Motor neuron (in vitro differentiated cells): ENCODE measurements at regions of chr15 and their contacts with region 1.

Region 1: GRCh38 chr15:88620995-88621772 is at the start of gene AEN:
- ATAC-seq: peak; percentile 83 to 98 (median 96)
- H3K4me3 ChIP-seq: peak within 1 kb of the TSS; percentile 55 to 79 (median 73)
- H3K27ac ChIP-seq: peak within 1 kb of the TSS; percentile 55 to 92
- H3K4me1 ChIP-seq: peaks cover 11 to 15% of the 10 kb centered on the region in 2 donors
- total RNA-seq, gene AEN: 15.0 to 65.1 (median 43.1) TPM

Region 2: DNA sequence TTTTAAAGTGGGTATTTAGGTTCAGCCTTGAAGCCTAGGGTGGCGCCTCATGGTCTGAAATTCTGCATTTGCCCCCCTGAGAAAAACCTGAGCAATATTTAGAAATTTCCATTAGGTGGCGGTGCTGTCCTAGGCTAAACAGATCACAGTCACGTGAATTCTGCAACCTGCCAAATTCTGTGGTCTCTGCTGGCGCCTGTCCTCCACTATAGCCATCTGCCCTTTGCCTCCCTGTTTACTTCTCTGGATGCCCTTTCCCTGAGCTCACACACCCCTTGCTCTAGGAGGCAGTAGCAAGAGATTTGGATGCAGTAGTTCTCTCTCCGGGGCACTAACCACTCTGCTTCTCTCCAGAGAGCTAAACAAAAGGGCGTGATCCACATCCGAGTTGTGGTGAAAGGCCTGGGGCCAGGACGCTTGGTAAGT is 144.5 kb before region 1 on chr15:
- in situ Hi-C with region 1: loop called in 7 of 9 experiments (anchors 10 to 25 kb)
- ATAC-seq: peak; percentile 66 to 86 (median 81)
- H3K4me3 ChIP-seq: no peak overlapping the region
- H3K27ac ChIP-seq: no peak overlapping the region
- H3K4me1 ChIP-seq: peaks cover 0 to 5% of the 10 kb centered on the region in 2 donors

Region 3: GRCh38 chr15:88776646-88777045 is 155.5 kb after region 1 on chr15:
- in situ Hi-C with region 1: no loop called
- ATAC-seq: no peak
- H3K4me3 ChIP-seq: no peak overlapping the region
- H3K27ac ChIP-seq: no peak overlapping the region
- H3K4me1 ChIP-seq: no peaks in the 10 kb centered on the region